GM12878 (cell line): ENCODE measurements at regions of chr11 and their contacts with region 1.

Region 1: DNA sequence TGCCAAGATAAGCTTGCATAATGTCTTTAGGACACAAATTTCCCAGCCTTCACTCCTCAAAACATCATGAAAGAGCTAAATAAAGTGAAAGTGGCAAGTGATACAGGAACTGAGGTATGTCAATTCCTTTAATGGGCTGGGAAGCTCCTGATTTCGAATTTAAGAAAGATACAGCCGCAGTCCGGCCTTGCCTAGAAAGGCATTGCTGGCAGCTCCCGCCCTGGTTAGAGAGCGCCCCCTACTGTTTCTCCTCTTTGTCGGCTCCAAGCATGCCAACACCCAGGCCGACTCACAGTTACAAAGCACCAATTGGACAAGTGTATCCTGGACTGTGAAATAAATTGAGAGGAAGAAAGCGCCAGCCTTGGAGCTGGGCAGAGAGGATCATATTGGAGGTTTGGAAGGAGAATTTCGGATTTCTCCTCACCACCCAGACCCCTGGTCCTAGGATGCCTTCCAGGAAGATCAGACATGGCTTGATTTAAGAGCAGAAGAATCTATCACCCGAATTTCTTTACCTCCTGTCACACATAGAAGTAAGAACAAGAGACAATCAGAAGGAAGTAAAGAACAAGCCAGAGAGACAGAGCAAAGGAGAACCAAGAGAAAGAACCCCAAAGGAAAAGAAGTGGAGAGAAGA is 84.0 kb downstream of the FAM76B start:
- DNase-seq: no peak
- ATAC-seq: peak; percentile 98
- H3K4me3 ChIP-seq: no peak overlapping the region
- H3K27ac ChIP-seq: no peak overlapping the region
- H3K4me1 ChIP-seq: peaks cover 6% of the 10 kb centered on the region
- H3K27me3 ChIP-seq: no peaks in the 10 kb centered on the region
- CTCF ChIP-seq: peak; percentile 92 to 97 (median 93)
- EP300 ChIP-seq: no peak
- POLR2A ChIP-seq: no peak
- RAD21 ChIP-seq: peak; percentile 99

Region 2: GRCh38 chr11:95248666-95249467 is 456.7 kb before region 1 on chr11:
- CTCF ChIA-PET with region 1: interaction called, 11 read pairs
- POLR2A ChIA-PET with region 1: interaction called, 7 read pairs
- RAD21 ChIA-PET with region 1: interaction called, 27 read pairs
- SMC1A ChIA-PET with region 1: interaction called, 16 read pairs
- in situ Hi-C with region 1: no loop called
- intact Hi-C with region 1: loop called (anchors 2 kb)
- DNase-seq: peak; percentile 74
- ATAC-seq: peak; percentile 85
- H3K4me3 ChIP-seq: peak overlapping the region; percentile 41; the same call in 1 of the 2 replicates
- H3K27ac ChIP-seq: peak overlapping the region; percentile 63
- H3K4me1 ChIP-seq: peaks cover 35% of the 10 kb centered on the region
- H3K27me3 ChIP-seq: no peaks in the 10 kb centered on the region
- CTCF ChIP-seq: no peak
- EP300 ChIP-seq: peak in 1 of 2 experiments; percentile 73; a peak in 1 of 4 replicates
- POLR2A ChIP-seq: no peak
- RAD21 ChIP-seq: no peak

Region 3: GRCh38 chr11:95443386-95443785 is 262.2 kb before region 1 on chr11:
- CTCF ChIA-PET with region 1: interaction called, 15 read pairs
- POLR2A ChIA-PET with region 1: no interaction called
- RAD21 ChIA-PET with region 1: interaction called, 9 read pairs
- SMC1A ChIA-PET with region 1: interaction called, 5 read pairs
- in situ Hi-C with region 1: no loop called
- intact Hi-C with region 1: loop called (anchors 5 kb)
- DNase-seq: peak; percentile 48
- ATAC-seq: peak; percentile 100
- H3K4me3 ChIP-seq: no peak overlapping the region
- H3K27ac ChIP-seq: no peak overlapping the region
- H3K4me1 ChIP-seq: no peaks in the 10 kb centered on the region; the same call in 1 of the 2 replicates
- H3K27me3 ChIP-seq: peaks cover 0 to 2% of the 10 kb centered on the region in 2 experiments; a peak in 1 of 4 replicates
- CTCF ChIP-seq: no peak
- EP300 ChIP-seq: peak in 1 of 2 experiments; percentile 21; a peak in 1 of 4 replicates
- POLR2A ChIP-seq: no peak
- RAD21 ChIP-seq: no peak

Region 4: GRCh38 chr11:95545116-95545875 is 160.3 kb before region 1 on chr11:
- CTCF ChIA-PET with region 1: interaction called, 36 read pairs
- POLR2A ChIA-PET with region 1: no interaction called
- RAD21 ChIA-PET with region 1: interaction called, 22 read pairs
- SMC1A ChIA-PET with region 1: interaction called, 23 read pairs
- in situ Hi-C with region 1: no loop called
- intact Hi-C with region 1: no loop called
- DNase-seq: no peak
- ATAC-seq: peak; percentile 62
- H3K4me3 ChIP-seq: no peak overlapping the region
- H3K27ac ChIP-seq: no peak overlapping the region
- H3K4me1 ChIP-seq: no peaks in the 10 kb centered on the region
- H3K27me3 ChIP-seq: no peaks in the 10 kb centered on the region; a peak in 1 of 4 replicates
- CTCF ChIP-seq: peak in 2 of 3 experiments; percentile 19 to 27; a peak in 2 of 6 replicates
- EP300 ChIP-seq: no peak
- POLR2A ChIP-seq: no peak
- RAD21 ChIP-seq: peak; percentile 30; the same call in 1 of the 2 replicates

Region 5: DNA sequence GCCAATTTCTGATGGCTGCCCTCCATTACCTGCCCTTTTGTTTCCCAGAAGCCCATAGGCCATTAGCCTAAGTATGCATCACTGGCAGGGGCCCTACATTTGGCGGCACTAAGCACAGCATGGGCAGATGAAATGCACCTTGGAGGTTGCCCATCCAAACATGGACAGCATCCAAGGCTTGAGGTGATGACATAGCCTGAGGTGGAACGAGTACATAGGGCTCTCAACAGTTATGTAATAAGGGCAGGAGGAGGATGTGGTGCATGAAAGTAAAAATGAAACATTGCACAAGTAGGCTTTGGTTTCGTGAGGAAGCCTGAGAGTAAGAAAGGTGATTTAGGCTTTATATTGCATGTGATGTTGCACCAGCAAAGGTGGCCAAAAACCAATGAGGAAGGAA is 64.1 kb before region 1 on chr11:
- CTCF ChIA-PET with region 1: interaction called, 5 read pairs
- POLR2A ChIA-PET with region 1: no interaction called
- RAD21 ChIA-PET with region 1: interaction called, 6 read pairs
- SMC1A ChIA-PET with region 1: interaction called, 11 read pairs
- in situ Hi-C with region 1: no loop called
- intact Hi-C with region 1: no loop called
- DNase-seq: peak; percentile 60
- ATAC-seq: peak; percentile 100
- H3K4me3 ChIP-seq: no peak overlapping the region
- H3K27ac ChIP-seq: no peak overlapping the region
- H3K4me1 ChIP-seq: peaks cover 9% of the 10 kb centered on the region
- H3K27me3 ChIP-seq: no peaks in the 10 kb centered on the region
- CTCF ChIP-seq: no peak
- EP300 ChIP-seq: peak in 1 of 2 experiments; percentile 41; a peak in 1 of 4 replicates
- POLR2A ChIP-seq: no peak
- RAD21 ChIP-seq: no peak

Region 6: DNA sequence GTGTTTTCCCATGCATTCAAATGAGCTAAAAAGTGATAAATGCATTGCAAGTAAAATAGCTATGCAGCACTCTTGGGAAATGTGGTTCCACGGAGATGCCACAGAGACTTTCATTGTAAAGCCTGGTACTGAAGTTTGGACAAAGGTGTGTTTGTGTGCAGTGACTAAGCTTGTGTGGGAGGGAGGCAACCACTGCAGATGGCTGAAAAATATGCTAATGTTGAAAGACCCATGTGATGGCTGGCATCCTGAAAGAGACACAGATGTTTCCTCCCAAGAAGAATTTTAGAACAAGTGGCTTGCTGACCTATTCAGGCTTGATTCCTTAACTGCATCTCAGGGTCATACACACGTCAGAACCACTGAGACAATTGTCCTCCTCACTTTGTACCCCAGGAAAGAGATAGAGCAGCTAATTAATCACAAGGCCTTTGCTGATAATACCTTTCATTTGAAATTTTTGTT is 10.2 kb after region 1 on chr11:
- CTCF ChIA-PET with region 1: interaction called, 53 read pairs
- POLR2A ChIA-PET with region 1: interaction called, 13 read pairs
- RAD21 ChIA-PET with region 1: interaction called, 114 read pairs
- SMC1A ChIA-PET with region 1: interaction called, 110 read pairs
- in situ Hi-C with region 1: no loop called
- intact Hi-C with region 1: no loop called
- DNase-seq: peak; percentile 89
- ATAC-seq: peak; percentile 84
- H3K4me3 ChIP-seq: no peak overlapping the region
- H3K27ac ChIP-seq: no peak overlapping the region
- H3K4me1 ChIP-seq: peaks cover 26% of the 10 kb centered on the region
- H3K27me3 ChIP-seq: no peaks in the 10 kb centered on the region
- CTCF ChIP-seq: no peak
- EP300 ChIP-seq: peak; percentile 87 to 89; a peak in 3 of 4 replicates
- POLR2A ChIP-seq: no peak
- RAD21 ChIP-seq: no peak